ENCODE measurements at regions of chr5 and their contacts with region 1.

Region 1: DNA sequence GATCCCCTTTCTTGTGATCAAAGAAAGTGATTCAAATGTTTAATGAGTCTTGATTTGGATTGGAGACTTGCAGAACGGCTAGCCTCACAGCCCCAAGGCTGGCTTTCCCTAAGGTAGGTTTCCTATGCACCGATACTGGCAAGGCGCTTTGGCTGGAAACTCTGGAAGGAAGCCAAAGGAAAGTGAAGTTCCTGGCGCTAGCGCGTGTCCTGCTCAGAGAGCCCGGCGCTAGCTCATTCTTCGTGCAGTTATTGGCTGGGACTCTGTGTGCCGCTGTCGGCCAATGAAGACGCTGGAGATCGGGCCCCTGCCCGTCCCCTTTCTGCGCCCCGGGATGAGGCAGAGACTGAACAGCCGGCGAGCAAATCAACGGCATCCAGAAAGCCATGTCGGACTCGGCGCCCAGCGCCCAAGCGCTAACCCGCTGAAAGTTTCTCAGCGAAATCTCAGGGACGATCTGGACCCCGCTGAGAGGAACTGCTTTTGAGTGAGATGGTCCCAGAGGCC is at the start of gene PCDHGC3:
- DNase-seq: peak in 1 of 2 experiments; percentile 86
- H3K4me3 ChIP-seq: peak within 1 kb of the TSS; percentile 68 to 85 (median 74)
- H3K27ac ChIP-seq: no peak within 1 kb of the TSS
- H3K4me1 ChIP-seq: peaks cover 0 to 5% (median 3%) of the 10 kb centered on the region in 4 experiments; a peak in 4 of 7 replicates
- H3K27me3 ChIP-seq: peaks cover 11 to 24% (median 23%) of the 10 kb centered on the region in 4 experiments
- CTCF ChIP-seq: peak; percentile 31 to 63 (median 49); a peak in 3 of 4 replicates
- EP300 ChIP-seq: no peak
- POLR2A ChIP-seq: no peak
- RAD21 ChIP-seq: peak; percentile 58 to 70
- total RNA-seq, gene PCDHGC3: 18.6 and 19.6 TPM in 2 replicates

Region 2: DNA sequence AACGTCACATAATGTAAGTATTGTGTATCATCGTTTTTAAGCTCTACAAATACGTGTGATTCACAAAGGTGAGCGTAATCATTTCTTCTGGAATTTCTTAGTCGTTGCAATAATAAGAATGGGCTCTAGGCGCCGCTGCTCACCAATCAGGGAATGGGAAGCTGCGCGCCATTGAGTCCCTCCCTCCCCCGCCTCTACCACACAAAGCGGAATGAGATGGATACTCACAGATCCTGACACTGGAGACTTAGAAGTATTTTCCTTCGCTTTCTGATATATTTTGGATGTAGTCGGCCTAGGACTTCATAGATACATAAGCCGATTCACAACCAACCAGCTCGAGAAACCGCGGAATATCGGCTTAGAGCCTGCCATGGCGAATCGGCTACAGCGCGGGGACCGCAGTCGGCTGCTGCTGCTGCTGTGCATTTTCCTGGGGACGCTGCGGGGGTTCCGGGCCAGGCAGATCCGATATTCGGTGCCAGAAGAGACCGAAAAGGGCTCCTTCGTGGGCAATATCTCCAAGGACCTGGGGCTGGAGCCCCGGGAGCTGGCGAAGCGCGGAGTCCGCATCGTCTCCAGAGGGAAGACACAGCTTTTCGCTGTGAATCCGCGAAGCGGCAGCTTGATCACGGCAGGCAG is 54.7 kb before region 1 on chr5 and contains the start of gene PCDHGA11:
- CTCF ChIA-PET with region 1: interaction called, 20 read pairs
- POLR2A ChIA-PET with region 1: interaction called, 3 read pairs
- DNase-seq: peak in 1 of 2 experiments; percentile 91
- H3K4me3 ChIP-seq: peak within 1 kb of the TSS; percentile 15 to 52 (median 32); a peak in 6 of 8 replicates
- H3K27ac ChIP-seq: no peak within 1 kb of the TSS
- H3K4me1 ChIP-seq: no peaks in the 10 kb centered on the region; a peak in 1 of 7 replicates
- H3K27me3 ChIP-seq: peaks cover 0 to 12% (median 6%) of the 10 kb centered on the region in 4 experiments; a peak in 4 of 7 replicates
- CTCF ChIP-seq: peak; percentile 59 to 77 (median 75)
- EP300 ChIP-seq: no peak
- POLR2A ChIP-seq: no peak
- RAD21 ChIP-seq: peak; percentile 88 to 90
- total RNA-seq, gene PCDHGA11: 8.2 and 8.3 TPM in 2 replicates

Region 3: DNA sequence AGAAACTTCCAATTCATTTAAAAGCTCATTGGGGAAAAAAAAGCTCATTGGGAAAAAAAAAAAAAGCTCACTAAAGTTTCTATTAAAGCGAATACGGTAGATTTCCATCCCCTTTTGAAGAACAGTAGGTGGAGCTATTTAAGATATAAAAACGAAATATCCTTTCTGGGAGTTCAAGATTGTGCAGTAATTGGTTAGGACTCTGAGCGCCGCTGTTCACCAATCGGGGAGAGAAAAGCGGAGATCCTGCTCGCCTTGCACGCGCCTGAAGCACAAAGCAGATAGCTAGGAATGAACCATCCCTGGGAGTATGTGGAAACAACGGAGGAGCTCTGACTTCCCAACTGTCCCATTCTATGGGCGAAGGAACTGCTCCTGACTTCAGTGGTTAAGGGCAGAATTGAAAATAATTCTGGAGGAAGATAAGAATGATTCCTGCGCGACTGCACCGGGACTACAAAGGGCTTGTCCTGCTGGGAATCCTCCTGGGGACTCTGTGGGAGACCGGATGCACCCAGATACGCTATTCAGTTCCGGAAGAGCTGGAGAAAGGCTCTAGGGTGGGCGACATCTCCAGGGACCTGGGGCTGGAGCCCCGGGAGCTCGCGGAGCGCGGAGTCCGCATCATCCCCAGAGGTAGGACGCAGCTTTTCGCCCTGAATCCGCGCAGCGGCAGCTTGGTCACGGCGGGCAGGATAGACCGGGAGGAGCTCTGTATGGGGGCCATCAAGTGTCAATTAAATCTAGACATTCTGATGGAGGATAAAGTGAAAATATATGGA is 45.2 kb before region 1 on chr5 and contains the start of gene PCDHGA12:
- CTCF ChIA-PET with region 1: interaction called, 16 read pairs
- POLR2A ChIA-PET with region 1: no interaction called
- DNase-seq: no peak
- H3K4me3 ChIP-seq: no peak within 1 kb of the TSS
- H3K27ac ChIP-seq: no peak within 1 kb of the TSS
- H3K4me1 ChIP-seq: no peaks in the 10 kb centered on the region
- H3K27me3 ChIP-seq: no peaks in the 10 kb centered on the region
- CTCF ChIP-seq: no peak; a peak in 1 of 4 replicates
- EP300 ChIP-seq: no peak
- POLR2A ChIP-seq: no peak
- RAD21 ChIP-seq: peak; percentile 18 to 36; a peak in 3 of 4 replicates
- total RNA-seq, gene PCDHGA12: 1.0 and 1.3 TPM in 2 replicates

Region 4: DNA sequence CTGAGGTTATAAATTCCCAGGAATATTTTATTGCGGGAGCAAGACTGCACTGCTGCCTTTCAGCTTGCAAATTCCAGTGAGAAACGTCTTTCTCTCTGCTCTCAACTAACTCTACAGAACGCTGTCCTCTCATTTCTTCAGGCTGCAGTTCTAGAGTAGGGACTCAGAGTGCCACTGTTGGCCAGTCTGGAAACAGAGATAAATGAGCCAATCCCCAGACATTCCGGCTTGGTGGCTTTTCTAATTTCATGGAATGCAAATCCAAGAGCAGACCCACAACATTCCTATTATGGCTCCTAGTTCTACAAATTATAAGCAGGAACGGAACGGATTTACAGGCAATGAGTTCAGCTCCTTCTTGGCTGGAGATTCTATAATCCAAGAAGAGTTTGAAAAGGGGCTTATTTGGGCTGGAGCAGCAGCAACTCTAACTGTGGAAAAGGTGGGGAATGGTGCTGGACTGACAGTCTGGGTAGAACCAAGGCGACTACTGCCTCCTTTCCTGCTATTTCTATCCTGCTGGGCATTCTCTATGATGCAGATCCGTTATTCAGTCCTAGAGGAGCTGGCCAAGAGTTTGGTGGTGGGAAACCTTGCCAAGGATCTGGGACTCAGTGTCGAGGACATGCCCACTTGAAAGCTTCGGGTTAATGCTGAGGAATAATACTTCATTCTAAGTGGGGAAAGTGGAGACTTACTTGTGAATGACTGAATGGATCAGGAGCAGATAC is 36.1 kb before region 1 on chr5:
- CTCF ChIA-PET with region 1: interaction called, 10 read pairs
- POLR2A ChIA-PET with region 1: no interaction called
- DNase-seq: no peak
- H3K4me3 ChIP-seq: no peak overlapping the region
- H3K27ac ChIP-seq: no peak overlapping the region
- H3K4me1 ChIP-seq: no peaks in the 10 kb centered on the region
- H3K27me3 ChIP-seq: no peaks in the 10 kb centered on the region
- CTCF ChIP-seq: no peak
- EP300 ChIP-seq: no peak
- POLR2A ChIP-seq: no peak
- RAD21 ChIP-seq: peak in 1 of 2 experiments; percentile 33; a peak in 2 of 4 replicates

Region 5: DNA sequence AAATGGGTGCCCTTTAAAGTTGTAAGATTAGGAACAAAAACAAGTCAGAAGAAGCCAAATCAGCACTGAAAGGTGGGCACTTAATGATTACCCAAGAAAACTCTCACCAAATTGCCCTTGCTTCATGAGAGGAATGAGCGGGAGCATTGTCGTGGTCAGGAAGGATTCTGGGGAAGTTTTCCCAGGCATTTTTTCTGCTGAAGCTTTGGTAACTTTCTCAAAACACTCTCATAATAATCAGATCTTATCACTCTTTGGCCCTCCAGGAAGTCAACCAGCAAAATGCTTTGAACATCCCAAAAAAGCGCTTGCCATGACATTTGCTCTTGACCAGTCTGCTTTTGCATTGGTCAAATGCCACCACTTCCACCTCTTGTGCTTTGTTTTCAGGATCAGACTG is 10.3 kb before region 1 on chr5:
- CTCF ChIA-PET with region 1: interaction called, 31 read pairs
- POLR2A ChIA-PET with region 1: interaction called, 4 read pairs
- DNase-seq: no peak
- H3K4me3 ChIP-seq: no peak overlapping the region
- H3K27ac ChIP-seq: no peak overlapping the region
- H3K4me1 ChIP-seq: no peaks in the 10 kb centered on the region
- H3K27me3 ChIP-seq: no peaks in the 10 kb centered on the region
- CTCF ChIP-seq: no peak
- EP300 ChIP-seq: no peak
- POLR2A ChIP-seq: no peak
- RAD21 ChIP-seq: no peak

Region 6: DNA sequence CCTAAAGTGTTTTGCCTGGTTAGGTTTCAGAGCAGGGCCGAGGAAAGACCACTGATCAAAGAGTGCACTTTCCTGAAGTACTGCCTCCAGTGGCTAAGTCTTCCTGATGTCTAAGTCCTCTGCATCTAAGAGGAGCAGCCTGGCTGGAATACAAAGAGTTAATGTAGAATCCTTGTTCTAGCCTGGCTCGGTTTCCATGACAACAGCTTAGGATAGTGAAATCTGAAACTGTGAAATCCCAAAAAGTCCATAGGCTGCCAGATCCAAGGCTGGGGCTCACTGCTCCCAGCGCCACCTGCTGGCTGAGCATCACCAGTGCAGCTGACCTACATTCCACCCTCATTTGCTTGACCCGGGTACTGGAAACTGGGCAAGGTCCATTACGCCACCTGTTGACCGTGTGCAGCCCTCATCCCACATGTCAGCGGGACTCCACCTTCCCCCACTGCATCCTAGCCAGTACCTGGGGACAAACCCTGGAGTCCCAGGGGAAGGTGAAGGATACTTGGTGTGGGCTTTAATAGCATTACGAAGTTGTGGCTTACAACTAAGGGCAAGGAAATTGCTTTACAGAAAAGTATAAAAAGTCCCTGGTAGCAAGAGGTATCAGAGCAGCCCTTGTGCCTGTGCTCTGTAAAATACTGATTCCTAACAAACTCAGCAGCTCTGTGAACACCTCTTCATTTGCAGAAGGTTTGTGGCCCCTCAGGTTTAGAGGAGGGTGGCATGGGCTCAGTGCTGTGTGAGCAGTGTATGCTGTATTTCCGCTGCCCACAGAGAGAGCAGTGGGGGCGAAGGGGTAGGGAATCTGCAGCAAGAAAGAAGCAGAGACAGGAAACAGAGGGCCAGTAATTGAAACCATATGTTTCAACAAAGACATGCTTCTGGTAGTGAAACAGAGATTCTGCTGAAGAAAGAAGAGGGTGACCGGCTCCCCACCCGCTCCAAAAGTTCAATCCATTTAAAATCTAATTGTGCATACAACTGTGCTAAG is 49.2 kb after region 1 on chr5:
- CTCF ChIA-PET with region 1: interaction called, 18 read pairs
- POLR2A ChIA-PET with region 1: interaction called, 4 read pairs
- DNase-seq: peak; percentile 90 to 95
- H3K4me3 ChIP-seq: no peak overlapping the region
- H3K27ac ChIP-seq: peak overlapping the region; percentile 26; the same call in 1 of the 2 replicates
- H3K4me1 ChIP-seq: peaks cover 2 to 15% (median 8%) of the 10 kb centered on the region in 4 experiments; a peak in 6 of 7 replicates
- H3K27me3 ChIP-seq: no peaks in the 10 kb centered on the region
- CTCF ChIP-seq: peak; percentile 99 to 100 (median 99)
- EP300 ChIP-seq: peak in 1 of 2 experiments; percentile 68; a peak in 1 of 3 replicates
- POLR2A ChIP-seq: no peak
- RAD21 ChIP-seq: peak; percentile 90 to 91

Region 7: GRCh38 chr5:141574122-141574510 is 98.4 kb after region 1 on chr5:
- CTCF ChIA-PET with region 1: no interaction called
- POLR2A ChIA-PET with region 1: no interaction called
- DNase-seq: no peak
- H3K4me3 ChIP-seq: no peak overlapping the region
- H3K27ac ChIP-seq: no peak overlapping the region
- H3K4me1 ChIP-seq: no peaks in the 10 kb centered on the region
- H3K27me3 ChIP-seq: no peaks in the 10 kb centered on the region
- CTCF ChIP-seq: no peak
- EP300 ChIP-seq: no peak
- POLR2A ChIP-seq: no peak
- RAD21 ChIP-seq: no peak

Measured in H1 (cell line).